ENCODE measurements at regions of chr20 and their contacts with region 1.

Region 1: GRCh38 chr20:37670351-37670791 is 23.5 kb upstream of the CTNNBL1 start:
- DNase-seq: peak in 1 of 2 donors; percentile 36
- ATAC-seq: no peak
- H3K4me3 ChIP-seq: peak overlapping the region in 6 of 10 donors; percentile 12 to 40 (median 34)
- H3K27ac ChIP-seq: no peak overlapping the region
- H3K4me1 ChIP-seq: peaks cover 0 to 9% (median 0%) of the 10 kb centered on the region in 9 donors
- H3K27me3 ChIP-seq: peaks cover 0 to 36% (median 15%) of the 10 kb centered on the region in 7 donors
- CTCF ChIP-seq: no peak

Region 2: GRCh38 chr20:37519508-37520128 is 150.8 kb before region 1 on chr20:
- intact Hi-C with region 1: no loop called
- DNase-seq: peak in 1 of 2 donors; percentile 24
- ATAC-seq: peak; percentile 13 to 65 (median 41)
- H3K4me3 ChIP-seq: peak overlapping the region in 1 of 10 donors; percentile 5
- H3K27ac ChIP-seq: peak overlapping the region; percentile 5 to 79 (median 60)
- H3K4me1 ChIP-seq: peaks cover 20 to 97% (median 71%) of the 10 kb centered on the region in 9 donors
- H3K27me3 ChIP-seq: no peaks in the 10 kb centered on the region
- CTCF ChIP-seq: peak in 1 of 9 donors; percentile 10

Region 3: DNA sequence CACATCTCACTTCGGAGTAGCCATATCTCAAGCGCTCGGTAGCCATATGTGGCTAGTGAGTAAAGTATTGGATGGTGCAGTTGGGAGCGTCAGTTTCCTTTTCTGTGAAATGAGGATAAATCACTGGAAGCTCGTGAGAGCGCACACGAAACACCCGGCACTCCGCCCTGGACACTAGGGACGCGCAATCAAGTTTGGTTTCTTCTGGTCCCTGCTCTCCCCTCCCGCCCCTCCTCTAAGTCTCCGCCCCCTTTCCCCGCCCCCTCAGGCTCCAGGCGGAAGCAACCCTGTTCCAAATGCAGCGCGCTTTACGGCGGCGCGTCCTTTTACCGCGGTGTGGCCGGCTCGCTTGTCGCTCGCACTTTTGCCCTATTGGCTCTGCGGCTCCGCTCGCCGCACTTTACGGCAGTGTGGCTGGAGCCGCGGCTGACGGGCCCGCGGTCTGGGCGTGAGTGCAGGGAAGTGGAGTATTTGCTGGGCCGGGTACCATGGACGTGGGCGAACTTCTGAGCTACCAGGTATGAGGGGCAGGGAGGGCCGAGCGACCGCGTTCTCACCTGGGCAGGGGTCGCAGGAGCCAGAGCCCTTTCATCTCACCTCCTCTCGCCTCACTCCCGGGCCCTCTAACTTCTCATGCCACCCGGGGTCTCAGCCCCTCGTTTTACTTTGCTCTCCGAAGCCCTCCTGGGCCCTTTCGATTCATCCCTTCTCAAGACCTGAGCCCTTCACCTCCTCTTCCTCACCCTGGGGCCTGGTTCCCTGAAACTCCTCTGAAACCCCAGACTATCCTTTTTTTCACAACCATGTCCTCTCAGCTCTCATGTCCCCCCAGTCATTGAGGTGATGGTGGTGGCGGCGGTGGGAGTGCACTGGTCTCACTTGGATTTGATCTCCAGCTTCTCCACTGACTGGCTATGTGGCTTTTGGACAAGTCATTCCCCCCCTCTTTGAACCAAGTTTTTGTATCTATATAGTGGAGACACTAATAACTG is 23.6 kb after region 1 on chr20 and contains the start of gene CTNNBL1:
- intact Hi-C with region 1: loop called in 1 of 10 experiments (anchors 1 kb)
- DNase-seq: peak; percentile 98 to 99
- ATAC-seq: peak; percentile 98 to 99 (median 99)
- H3K4me3 ChIP-seq: peak within 1 kb of the TSS; percentile 68 to 98 (median 84)
- H3K27ac ChIP-seq: peak within 1 kb of the TSS in 8 of 10 donors; percentile 46 to 87 (median 76)
- H3K4me1 ChIP-seq: peaks cover 3 to 25% (median 19%) of the 10 kb centered on the region in 9 donors
- H3K27me3 ChIP-seq: peaks cover 0 to 26% (median 0%) of the 10 kb centered on the region in 7 donors
- CTCF ChIP-seq: peak in 3 of 9 donors; percentile 8 to 28 (median 17)
- total RNA-seq, gene CTNNBL1: 43.2 to 62.2 (median 52.0) TPM

Region 4: GRCh38 chr20:37734228-37734985 is 64.0 kb after region 1 on chr20:
- intact Hi-C with region 1: loop called in 1 of 10 experiments (anchors 10 kb)
- DNase-seq: no peak
- ATAC-seq: peak in 2 of 8 donors; percentile 18 to 32
- H3K4me3 ChIP-seq: no peak overlapping the region
- H3K27ac ChIP-seq: peak overlapping the region in 3 of 10 donors; percentile 10 to 47 (median 37)
- H3K4me1 ChIP-seq: peaks cover 0 to 57% (median 31%) of the 10 kb centered on the region in 9 donors
- H3K27me3 ChIP-seq: no peaks in the 10 kb centered on the region
- CTCF ChIP-seq: no peak